ENCODE measurements at regions of chr2 and their contacts with region 1.

Region 1: GRCh38 chr2:122136056-122136455 is 380.6 kb downstream of the TSN start:
- DNase-seq: peak; percentile 16
- ATAC-seq: peak; percentile 84
- H3K4me3 ChIP-seq: no peak overlapping the region
- H3K27ac ChIP-seq: no peak overlapping the region
- H3K4me1 ChIP-seq: no peaks in the 10 kb centered on the region
- H3K27me3 ChIP-seq: no peaks in the 10 kb centered on the region
- CTCF ChIP-seq: peak; percentile 28 to 80 (median 69); a peak in 5 of 6 replicates
- POLR2A ChIP-seq: no peak
- RAD21 ChIP-seq: peak; percentile 33

Region 2: DNA sequence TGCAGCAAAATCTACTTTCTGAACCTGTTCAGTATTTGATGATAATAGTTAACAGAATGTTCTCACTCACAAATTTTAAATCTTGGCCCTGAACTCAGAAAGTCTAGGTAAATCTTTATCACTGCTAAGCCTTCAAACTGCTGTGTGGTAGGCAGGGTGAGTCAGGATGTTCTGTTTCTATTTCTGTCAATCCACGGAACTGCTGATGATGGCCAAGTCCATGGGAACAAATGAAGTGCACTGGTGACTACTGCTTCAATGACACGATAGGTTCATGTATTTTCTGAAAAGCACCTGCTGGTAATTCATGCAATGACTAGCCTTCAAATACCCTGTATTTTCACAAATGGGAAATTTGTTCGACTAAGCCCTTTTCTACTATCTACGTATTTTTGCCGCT is 413.6 kb before region 1 on chr2:
- CTCF ChIA-PET with region 1: no interaction called
- POLR2A ChIA-PET with region 1: no interaction called
- RAD21 ChIA-PET with region 1: no interaction called
- intact Hi-C with region 1: no loop called
- DNase-seq: no peak
- ATAC-seq: no peak
- H3K4me3 ChIP-seq: no peak overlapping the region
- H3K27ac ChIP-seq: no peak overlapping the region
- H3K4me1 ChIP-seq: peaks cover 0 to 15% of the 10 kb centered on the region in 2 experiments; a peak in 1 of 4 replicates
- H3K27me3 ChIP-seq: no peaks in the 10 kb centered on the region
- CTCF ChIP-seq: no peak
- POLR2A ChIP-seq: no peak
- RAD21 ChIP-seq: no peak

Region 3: GRCh38 chr2:121810959-121811853 is 324.9 kb before region 1 on chr2:
- CTCF ChIA-PET with region 1: interaction called, 3 read pairs
- POLR2A ChIA-PET with region 1: no interaction called
- RAD21 ChIA-PET with region 1: no interaction called
- intact Hi-C with region 1: loop called (anchors 1 kb)
- DNase-seq: peak; percentile 35
- ATAC-seq: peak; percentile 97
- H3K4me3 ChIP-seq: no peak overlapping the region
- H3K27ac ChIP-seq: no peak overlapping the region
- H3K4me1 ChIP-seq: no peaks in the 10 kb centered on the region
- H3K27me3 ChIP-seq: peaks cover 2% of the 10 kb centered on the region; the same call in 1 of the 2 replicates
- CTCF ChIP-seq: peak; percentile 38 to 65 (median 55); a peak in 5 of 6 replicates
- POLR2A ChIP-seq: no peak
- RAD21 ChIP-seq: peak; percentile 73